Naive thymus-derived CD4-positive, alpha-beta T cell (primary cell): ENCODE measurements at regions of chr15 and their contacts with region 1.

Region 1: GRCh38 chr15:85582131-85583079 is 202.0 kb downstream of the AKAP13 start:
- DNase-seq: peak in 8 of 9 donors; percentile 51 to 72 (median 66)
- ATAC-seq: peak; percentile 73
- H3K4me3 ChIP-seq: peak overlapping the region; percentile 49
- H3K4me3 Mint-ChIP-seq: peak overlapping the region; percentile 79 to 92 (median 85)
- H3K27ac ChIP-seq: peak overlapping the region; percentile 75
- H3K27ac Mint-ChIP-seq: peak overlapping the region; percentile 83 to 99 (median 94)
- H3K4me1 ChIP-seq: peaks cover 48 to 49% of the 10 kb centered on the region in 2 donors
- H3K4me1 Mint-ChIP-seq: peaks cover 56 to 77% (median 74%) of the 10 kb centered on the region in 7 donors
- H3K27me3 ChIP-seq: no peaks in the 10 kb centered on the region
- H3K27me3 Mint-ChIP-seq: no peaks in the 10 kb centered on the region

Region 2: DNA sequence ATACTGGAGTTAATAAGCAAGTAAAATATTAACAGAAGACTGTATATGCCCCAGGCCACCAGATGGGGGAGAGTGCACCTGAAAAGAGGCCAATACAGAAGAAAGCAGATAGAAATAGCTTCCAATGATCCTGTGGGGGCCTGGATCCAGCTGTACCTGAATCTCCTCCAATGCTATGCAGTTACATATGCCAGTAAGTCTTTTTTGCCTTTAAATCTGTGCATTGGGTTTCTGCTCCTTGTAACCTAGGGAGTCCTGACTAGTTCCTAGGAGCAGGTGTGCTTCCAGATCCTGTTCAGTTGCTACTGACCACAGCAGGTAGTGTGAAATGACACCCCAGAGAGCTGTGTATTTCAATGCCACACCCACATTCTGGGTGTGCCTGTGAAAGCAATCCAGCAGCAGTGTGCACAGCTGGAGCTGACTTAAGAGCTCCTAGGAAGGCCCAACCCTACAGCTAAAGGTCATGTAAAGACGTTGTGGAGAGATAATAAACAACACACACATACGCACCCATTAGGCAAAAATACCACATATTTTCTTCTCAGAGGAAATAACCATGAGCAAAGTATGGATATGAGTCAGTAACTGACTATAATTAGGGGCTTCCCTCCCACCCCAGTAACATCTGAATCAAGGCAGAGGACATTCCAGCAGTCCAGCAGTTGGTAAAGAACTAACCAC is 264.2 kb before region 1 on chr15:
- CTCF ChIA-PET with region 1: no interaction called
- POLR2A ChIA-PET with region 1: no interaction called
- intact Hi-C with region 1: loop called in 1 of 2 experiments (anchors 5 kb)
- DNase-seq: peak in 1 of 9 donors; percentile 29
- ATAC-seq: peak; percentile 61
- H3K4me3 ChIP-seq: no peak overlapping the region
- H3K4me3 Mint-ChIP-seq: peak overlapping the region in 2 of 10 donors; percentile 16 to 74
- H3K27ac ChIP-seq: no peak overlapping the region
- H3K27ac Mint-ChIP-seq: peak overlapping the region in 4 of 9 donors; percentile 22 to 90 (median 27)
- H3K4me1 ChIP-seq: peaks cover 28 to 29% of the 10 kb centered on the region in 2 donors
- H3K4me1 Mint-ChIP-seq: peaks cover 22 to 53% (median 35%) of the 10 kb centered on the region in 7 donors
- H3K27me3 ChIP-seq: no peaks in the 10 kb centered on the region
- H3K27me3 Mint-ChIP-seq: no peaks in the 10 kb centered on the region

Region 3: GRCh38 chr15:85485956-85486567 is 96.3 kb before region 1 on chr15:
- CTCF ChIA-PET with region 1: interaction called, 3 read pairs
- POLR2A ChIA-PET with region 1: no interaction called
- intact Hi-C with region 1: loop called (anchors 10 kb)
- DNase-seq: peak in 8 of 9 donors; percentile 50 to 73 (median 66)
- ATAC-seq: peak; percentile 96
- H3K4me3 ChIP-seq: no peak overlapping the region
- H3K4me3 Mint-ChIP-seq: no peak overlapping the region
- H3K27ac ChIP-seq: no peak overlapping the region
- H3K27ac Mint-ChIP-seq: peak overlapping the region in 4 of 9 donors; percentile 2 to 73 (median 56)
- H3K4me1 ChIP-seq: peaks cover 16 to 17% of the 10 kb centered on the region in 2 donors
- H3K4me1 Mint-ChIP-seq: peaks cover 45 to 84% (median 70%) of the 10 kb centered on the region in 7 donors
- H3K27me3 ChIP-seq: no peaks in the 10 kb centered on the region
- H3K27me3 Mint-ChIP-seq: no peaks in the 10 kb centered on the region

Region 4: GRCh38 chr15:85618956-85619491 is 36.6 kb after region 1 on chr15:
- CTCF ChIA-PET with region 1: interaction called, 3 read pairs
- POLR2A ChIA-PET with region 1: interaction called, 4 read pairs
- intact Hi-C with region 1: loop called (anchors 2 kb)
- DNase-seq: peak in 6 of 9 donors; percentile 13 to 68 (median 24)
- ATAC-seq: peak; percentile 77
- H3K4me3 ChIP-seq: peak overlapping the region; percentile 3
- H3K4me3 Mint-ChIP-seq: no peak overlapping the region
- H3K27ac ChIP-seq: peak overlapping the region; percentile 6
- H3K27ac Mint-ChIP-seq: no peak overlapping the region
- H3K4me1 ChIP-seq: peaks cover 29 to 38% of the 10 kb centered on the region in 2 donors
- H3K4me1 Mint-ChIP-seq: peaks cover 14 to 41% (median 26%) of the 10 kb centered on the region in 7 donors
- H3K27me3 ChIP-seq: no peaks in the 10 kb centered on the region
- H3K27me3 Mint-ChIP-seq: no peaks in the 10 kb centered on the region

Region 5: GRCh38 chr15:85689729-85690128 is 107.3 kb after region 1 on chr15:
- CTCF ChIA-PET with region 1: no interaction called
- POLR2A ChIA-PET with region 1: no interaction called
- intact Hi-C with region 1: loop called (anchors 1 to 2 kb)
- DNase-seq: peak; percentile 44 to 78 (median 71)
- ATAC-seq: peak; percentile 85
- H3K4me3 ChIP-seq: peak overlapping the region; percentile 83
- H3K4me3 Mint-ChIP-seq: peak overlapping the region; percentile 90 to 99 (median 98)
- H3K27ac ChIP-seq: peak overlapping the region; percentile 88
- H3K27ac Mint-ChIP-seq: peak overlapping the region; percentile 92 to 99 (median 98)
- H3K4me1 ChIP-seq: peaks cover 45 to 49% of the 10 kb centered on the region in 2 donors
- H3K4me1 Mint-ChIP-seq: peaks cover 30 to 87% (median 76%) of the 10 kb centered on the region in 7 donors
- H3K27me3 ChIP-seq: no peaks in the 10 kb centered on the region
- H3K27me3 Mint-ChIP-seq: no peaks in the 10 kb centered on the region